ENCODE measurements at regions of chr1 and their contacts with region 1.

Region 1: DNA sequence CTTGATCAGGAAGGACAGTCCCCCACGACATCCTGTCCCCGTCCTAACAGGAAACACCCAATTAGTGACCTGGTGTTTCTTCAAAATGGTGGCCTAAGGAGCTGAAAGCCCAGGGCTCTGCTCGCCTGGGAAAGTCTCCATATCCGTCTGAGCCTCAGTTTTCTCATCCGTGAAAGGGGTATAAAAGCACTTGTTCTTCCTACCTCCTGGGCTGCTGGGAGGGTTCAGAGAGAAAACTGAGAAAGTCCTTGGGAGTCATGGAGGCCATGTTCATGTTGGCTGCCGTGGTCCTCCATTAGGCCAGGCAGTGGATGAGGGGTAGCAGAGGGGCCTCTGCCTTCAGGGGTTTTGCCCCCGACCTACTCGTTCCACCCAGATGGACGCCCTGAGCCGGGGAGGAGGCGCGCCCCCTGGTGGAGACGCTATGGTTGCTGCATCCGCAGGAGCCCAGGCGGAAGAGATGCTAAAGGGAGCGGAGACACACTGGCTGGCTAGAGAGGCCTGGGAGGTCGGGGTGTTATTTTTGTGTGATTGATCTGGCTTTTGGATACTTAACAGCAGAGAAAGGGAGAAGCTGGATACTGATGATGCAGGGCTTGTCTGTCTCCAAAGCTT is 113.5 kb downstream of the PRDM2 start:
- DNase-seq: no peak
- ATAC-seq: peak; percentile 48 to 51

Region 2: DNA sequence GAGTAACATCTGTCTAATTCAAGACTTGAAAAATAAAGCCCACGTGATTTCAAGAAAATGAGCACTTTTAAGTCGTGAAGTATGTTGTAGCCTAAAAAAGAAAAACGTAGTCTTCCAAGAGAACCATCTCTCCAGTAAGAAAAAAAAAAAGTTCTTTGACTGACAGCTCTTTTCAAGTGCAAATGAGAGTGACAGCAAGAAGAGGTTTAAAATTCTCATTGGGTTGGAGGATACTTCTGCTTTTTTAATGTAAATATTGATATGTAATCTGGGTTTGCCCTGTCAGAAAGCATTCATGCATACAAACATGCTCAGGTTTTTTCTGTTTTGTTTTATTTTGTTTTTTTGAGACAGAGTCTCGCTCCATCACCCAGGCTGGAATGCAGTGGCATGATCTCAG is 145.8 kb before region 1 on chr1:
- intact Hi-C with region 1: loop called in 1 of 2 experiments (anchors 5 kb)
- DNase-seq: no peak
- ATAC-seq: no peak

Measured in left cardiac atrium (tissue), 4 donors.